Activated CD4-positive, alpha-beta memory T cell treated with anti-CD3 and anti-CD28 coated beads, Interleukin-2, amount 10 ng/mL, durations not matched to agents 7 days and 5 days (primary cell): ENCODE measurements at regions of chr1 and their contacts with region 1.

Region 1: DNA sequence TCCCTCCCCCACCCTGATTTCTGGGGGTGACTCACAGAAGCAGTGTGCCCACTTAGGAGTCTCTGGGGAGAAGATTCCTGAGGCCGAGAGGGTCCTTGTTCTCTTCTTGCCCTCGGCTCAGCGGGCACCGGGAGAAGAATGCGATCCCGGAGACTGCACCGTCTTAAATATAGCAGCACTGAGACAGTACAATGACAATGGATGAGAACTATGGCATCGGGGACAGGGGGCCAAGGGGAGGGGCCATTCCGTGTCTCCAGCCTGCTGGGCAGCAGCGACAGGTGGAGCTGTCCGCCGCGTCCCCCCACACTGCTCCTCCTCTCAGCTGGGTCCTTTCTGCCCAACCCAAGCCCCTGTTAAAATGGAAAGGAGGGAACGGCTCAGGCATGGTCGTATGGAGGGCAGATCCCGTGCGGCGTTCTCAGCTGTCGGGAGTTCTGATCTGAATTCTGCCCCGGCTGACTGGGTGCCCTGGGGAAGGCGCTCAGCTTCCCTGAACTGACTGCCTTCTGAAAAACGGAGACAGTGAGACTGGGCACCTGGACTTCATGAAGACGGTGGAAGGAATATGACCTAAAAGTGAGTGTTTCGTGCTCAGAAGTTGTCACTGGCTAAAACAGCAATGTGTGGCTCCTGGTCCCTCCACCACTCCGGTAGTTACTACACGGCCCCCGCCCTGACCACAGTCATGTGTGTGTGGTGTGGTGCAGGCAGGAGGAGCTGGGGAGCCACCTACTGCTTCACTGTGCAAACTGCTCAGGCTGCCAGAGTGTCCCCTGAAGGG is at the start of gene MYOM3:
- DNase-seq: peak; percentile 79
- H3K4me3 Mint-ChIP-seq: no peak within 1 kb of the TSS
- H3K27ac Mint-ChIP-seq: no peak within 1 kb of the TSS
- H3K4me1 Mint-ChIP-seq: peaks cover 18% of the 10 kb centered on the region
- H3K27me3 Mint-ChIP-seq: peaks cover 29% of the 10 kb centered on the region
- total RNA-seq, gene MYOM3: not detected

Region 2: DNA sequence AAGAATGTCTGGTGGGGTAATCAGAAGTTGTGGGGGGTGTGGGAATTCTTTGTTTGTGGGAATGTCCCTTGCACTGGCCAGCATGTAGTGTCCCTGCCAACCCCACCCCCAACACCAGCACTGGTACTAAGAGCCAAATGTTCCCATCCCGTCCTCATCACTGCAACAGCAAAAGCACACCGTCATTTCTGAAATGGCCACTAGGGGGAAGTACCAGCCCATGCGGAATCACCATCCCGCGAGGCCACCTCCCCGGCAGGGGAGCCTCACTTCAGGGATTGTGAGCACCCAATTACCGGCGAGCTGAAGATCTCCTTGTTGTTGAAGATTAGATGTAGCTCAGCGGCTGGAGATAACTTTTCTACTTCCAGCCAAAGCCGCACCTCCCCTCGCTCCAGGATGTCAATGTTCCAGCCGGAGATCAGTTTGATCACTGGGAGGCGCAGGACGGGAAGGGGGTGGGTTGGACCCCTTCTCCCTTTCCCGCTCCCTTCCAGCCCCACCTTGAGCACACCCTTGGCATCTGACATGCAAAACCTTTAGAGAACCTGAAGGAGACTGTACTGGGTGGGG is 41.3 kb before region 1 on chr1:
- CTCF ChIA-PET with region 1: interaction called, 22 read pairs
- POLR2A ChIA-PET with region 1: no interaction called
- DNase-seq: peak; percentile 78
- H3K4me3 Mint-ChIP-seq: no peak overlapping the region
- H3K27ac Mint-ChIP-seq: no peak overlapping the region
- H3K4me1 Mint-ChIP-seq: peaks cover 4% of the 10 kb centered on the region
- H3K27me3 Mint-ChIP-seq: peaks cover 13% of the 10 kb centered on the region

Region 3: DNA sequence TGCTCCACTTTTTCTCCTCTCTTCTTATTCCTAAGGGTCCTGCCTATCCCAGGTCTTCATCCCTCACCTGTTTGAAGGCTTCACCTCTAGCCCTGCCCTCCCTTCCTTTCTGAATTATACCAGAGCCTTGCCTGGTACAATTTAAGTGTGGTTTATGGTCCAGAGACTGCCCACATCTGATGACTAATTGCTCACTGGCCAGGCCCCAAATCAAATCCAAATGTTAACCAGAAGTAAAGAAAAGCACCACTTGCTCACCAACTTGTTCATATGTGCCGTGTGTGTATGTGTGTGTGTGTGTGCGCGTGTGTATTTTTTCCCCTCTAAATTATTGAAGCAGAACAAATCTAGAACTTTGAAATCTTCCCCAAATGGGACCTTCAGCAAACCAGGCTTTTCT is 26.6 kb before region 1 on chr1:
- CTCF ChIA-PET with region 1: no interaction called
- POLR2A ChIA-PET with region 1: no interaction called
- DNase-seq: no peak
- H3K4me3 Mint-ChIP-seq: no peak overlapping the region
- H3K27ac Mint-ChIP-seq: no peak overlapping the region
- H3K4me1 Mint-ChIP-seq: no peaks in the 10 kb centered on the region
- H3K27me3 Mint-ChIP-seq: peaks cover 14% of the 10 kb centered on the region